Cardiac septum (tissue), 1 donor: ENCODE measurements at regions of chr11 and their contacts with region 1.

Region 1: GRCh38 chr11:4072668-4073285 is 21.8 kb upstream of the RRM1 start:
- DNase-seq: no peak

Region 2: GRCh38 chr11:3849297-3849874 is 223.4 kb before region 1 on chr11:
- intact Hi-C with region 1: loop called (anchors 1 kb)
- DNase-seq: no peak

Region 3: DNA sequence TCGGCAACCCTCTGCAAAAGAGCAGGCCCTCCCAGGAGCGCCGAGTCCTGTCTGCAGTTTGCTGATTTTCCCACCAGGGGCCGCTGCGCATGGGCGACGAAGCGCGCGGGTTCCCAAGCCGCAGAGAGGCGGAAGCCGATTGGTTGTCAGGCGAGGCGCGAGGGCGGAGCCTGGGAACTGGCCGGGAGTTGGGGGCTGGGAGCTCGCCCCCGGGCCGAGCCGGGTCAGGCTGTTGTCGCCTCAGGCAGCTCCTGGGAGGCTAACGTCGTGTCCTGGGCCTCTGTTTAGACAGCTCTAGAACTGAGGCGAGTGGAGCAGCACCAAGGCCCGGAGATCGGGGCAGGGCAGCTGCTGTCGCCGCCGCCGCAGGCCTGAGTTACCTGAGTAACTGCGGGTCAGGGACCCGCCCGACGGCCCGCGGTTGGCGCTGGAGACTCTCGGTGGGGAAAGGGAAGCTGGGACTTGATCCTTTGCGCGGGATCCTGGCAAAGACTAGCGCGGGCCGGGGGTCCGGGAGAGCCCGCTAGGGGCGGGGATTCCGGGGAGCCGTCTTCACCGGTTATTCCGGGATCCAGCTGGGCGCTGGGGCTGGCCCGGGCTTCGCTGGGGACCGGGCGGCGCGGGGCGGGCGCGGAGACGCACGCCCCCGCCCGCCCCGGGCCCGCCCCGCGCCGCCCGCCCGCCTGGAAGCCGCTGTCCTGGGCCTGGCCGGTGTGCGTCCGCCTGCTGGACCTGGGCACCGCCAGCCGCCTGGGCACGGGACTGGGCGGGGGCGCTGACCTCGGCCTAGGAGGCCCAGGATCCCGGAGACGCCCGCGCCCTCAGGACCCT is 217.6 kb before region 1 on chr11 and contains the start of gene STIM1:
- intact Hi-C with region 1: loop called (anchors 1 kb)
- DNase-seq: peak; percentile 98
- total RNA-seq, gene STIM1: 40.4 TPM

Region 4: DNA sequence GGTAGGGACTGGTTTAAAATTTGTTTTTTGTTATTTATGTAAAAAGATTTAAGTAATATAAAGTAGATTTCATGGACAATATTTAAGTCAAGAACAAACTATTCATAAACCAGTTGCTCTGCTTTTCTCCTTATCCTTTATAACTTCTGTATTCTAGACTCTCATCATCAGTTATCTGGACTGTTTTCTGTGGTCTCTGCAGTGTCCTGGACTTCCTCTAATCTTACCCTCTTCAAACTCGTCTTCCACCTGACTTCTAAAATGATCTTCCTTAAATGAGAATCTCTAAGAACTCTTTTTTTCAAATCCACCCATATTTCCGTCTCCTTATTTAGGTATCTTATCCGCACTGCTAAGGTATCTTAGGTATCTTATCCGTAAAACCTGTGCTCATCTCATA is 29.9 kb after region 1 on chr11:
- intact Hi-C with region 1: no loop called
- DNase-seq: no peak